ENCODE measurements at regions of chrX and their contacts with region 1.

Region 1: DNA sequence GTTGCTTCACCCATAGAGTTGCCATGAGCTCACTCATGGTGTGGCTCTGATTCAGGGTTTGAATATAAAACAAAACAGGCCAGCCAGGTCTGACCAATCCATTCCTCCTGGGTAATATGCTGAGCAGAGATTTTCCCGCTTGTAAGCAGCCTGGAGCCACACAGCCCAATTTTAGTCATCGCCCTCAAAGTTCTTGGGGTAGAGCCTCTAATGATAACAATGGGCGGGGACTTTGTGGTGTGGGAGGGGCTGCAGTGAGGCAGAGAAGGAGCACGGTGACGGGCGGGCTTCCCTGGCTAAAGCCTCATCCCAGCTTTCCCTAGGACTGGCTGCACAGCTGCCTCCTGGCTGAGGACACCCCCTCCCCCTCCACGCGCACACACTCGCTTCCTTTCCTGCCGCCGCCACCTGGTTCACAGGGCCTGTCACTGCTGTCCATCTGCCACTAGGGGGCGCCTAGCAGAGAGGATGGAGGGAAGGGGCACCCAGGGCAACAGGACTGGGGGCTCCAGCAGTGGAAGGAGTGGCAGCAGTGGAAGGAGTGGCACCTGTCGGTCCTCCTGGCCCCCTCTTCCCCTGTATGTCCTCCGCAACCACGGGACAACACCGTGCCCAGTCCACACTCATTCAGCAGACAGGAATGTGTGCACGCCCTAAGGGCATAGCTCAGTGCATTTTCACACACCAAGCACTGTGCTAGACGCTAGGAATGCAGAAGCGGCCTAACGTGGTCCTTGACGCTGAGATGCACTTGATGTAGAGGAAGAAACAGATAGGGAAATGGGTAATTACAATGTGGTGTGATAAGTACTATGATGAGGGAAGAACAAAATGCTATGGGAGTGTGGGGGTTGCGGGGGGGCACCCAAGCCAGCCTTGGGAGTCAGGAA is 26.8 kb downstream of the PRPS1 start:
- DNase-seq: peak; percentile 64
- ATAC-seq: peak; percentile 83

Region 2: GRCh38 chrX:107398115-107398514 is 257.0 kb before region 1 on chrX:
- intact Hi-C with region 1: no loop called
- DNase-seq: no peak
- ATAC-seq: no peak

Region 3: GRCh38 chrX:107448998-107449835 is 205.9 kb before region 1 on chrX and contains the start of gene FRMPD3:
- intact Hi-C with region 1: no loop called
- DNase-seq: peak; percentile 30
- ATAC-seq: no peak
- total RNA-seq, gene FRMPD3: not detected

Region 4: DNA sequence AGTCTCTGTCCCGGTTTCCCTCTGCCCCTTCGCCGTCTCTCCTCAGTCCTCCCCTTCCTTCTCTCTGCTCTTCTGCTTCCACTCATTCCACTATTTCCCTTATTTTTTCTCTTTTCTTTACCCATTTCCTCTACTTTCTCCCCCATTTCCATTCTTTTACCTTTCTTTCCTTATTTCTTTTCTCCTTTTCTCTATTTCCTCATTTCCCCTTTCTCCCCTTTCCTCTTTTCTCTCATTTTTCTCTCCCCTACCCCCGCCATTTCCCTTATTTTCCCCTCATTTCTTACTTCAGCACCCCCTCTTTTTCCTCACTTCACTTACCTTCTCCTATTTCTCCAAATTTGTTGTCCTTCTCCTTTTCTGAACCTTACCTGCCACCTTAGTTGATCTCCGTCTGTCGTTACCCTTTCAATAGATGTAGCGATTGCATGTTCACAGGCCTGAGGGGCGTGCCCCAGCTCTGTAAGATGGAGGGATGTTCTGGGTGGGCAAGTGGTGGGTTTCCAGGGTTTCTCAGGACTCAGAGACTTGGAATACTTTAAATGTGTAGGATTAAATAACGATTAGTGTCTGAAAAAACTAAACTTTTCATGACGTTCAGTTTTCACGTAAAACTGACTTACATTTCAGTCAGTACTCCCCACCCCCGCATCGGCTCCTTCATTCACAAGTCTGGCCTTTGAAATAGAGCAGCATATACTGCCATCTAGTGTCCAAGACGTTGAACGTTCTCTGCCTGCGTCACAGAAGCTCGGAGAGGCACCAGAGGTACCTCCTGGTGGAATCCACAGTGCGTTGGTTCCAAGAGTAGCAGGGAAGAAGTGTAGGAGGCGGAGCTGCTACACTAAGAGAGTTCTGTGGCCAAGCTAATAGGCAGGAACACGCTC is 121.8 kb after region 1 on chrX:
- intact Hi-C with region 1: loop called (anchors 5 kb)
- DNase-seq: peak; percentile 71
- ATAC-seq: peak; percentile 78

Region 5: DNA sequence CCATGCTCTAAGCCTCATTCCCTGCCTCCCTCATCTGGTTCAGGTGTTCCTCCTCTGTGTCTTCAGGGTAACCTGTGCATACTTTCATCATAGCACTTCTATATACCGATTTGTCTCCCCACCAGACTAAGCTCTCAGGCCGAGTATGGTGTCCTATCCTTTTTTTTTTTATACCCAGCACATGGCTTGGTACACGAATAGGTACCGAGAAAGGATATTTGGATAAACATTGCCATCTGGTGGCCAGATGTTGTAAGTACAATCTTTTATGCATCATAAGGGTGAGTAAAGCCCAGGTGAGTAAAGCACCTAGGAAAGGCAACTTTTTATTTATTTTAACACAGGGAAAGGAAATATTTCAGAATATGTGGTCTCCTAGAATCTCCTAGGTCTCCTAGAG is 238.9 kb after region 1 on chrX:
- intact Hi-C with region 1: loop called (anchors 5 kb)
- DNase-seq: no peak
- ATAC-seq: peak; percentile 56

Region 6: DNA sequence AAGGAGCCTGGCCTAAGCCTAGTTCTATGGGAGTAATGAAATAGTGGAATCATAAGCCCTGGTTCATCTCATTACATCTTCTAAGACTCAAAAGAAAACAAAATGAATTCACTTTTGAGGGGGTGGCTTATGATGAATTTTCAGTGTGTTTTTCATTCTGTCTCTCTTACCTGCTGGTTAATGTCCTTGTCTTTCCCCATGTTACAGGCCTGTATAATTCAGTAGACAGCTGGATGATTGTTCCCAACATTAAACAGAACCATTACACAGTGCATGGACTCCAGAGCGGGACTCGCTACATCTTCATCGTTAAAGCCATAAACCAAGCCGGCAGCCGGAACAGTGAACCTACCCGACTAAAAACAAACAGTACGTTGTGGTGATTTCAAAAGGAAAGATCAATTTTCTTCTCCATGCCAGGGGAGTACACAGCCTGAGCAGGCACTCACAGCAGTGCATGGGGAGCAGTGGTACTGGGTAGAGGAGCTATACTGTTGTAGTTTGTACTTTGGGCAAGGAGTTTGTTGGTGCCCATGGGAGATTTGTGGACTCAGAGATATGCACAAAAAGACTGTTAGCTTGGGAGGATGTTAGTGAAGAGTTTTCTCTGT is 269.1 kb after region 1 on chrX:
- intact Hi-C with region 1: no loop called
- DNase-seq: no peak
- ATAC-seq: no peak

Region 7: DNA sequence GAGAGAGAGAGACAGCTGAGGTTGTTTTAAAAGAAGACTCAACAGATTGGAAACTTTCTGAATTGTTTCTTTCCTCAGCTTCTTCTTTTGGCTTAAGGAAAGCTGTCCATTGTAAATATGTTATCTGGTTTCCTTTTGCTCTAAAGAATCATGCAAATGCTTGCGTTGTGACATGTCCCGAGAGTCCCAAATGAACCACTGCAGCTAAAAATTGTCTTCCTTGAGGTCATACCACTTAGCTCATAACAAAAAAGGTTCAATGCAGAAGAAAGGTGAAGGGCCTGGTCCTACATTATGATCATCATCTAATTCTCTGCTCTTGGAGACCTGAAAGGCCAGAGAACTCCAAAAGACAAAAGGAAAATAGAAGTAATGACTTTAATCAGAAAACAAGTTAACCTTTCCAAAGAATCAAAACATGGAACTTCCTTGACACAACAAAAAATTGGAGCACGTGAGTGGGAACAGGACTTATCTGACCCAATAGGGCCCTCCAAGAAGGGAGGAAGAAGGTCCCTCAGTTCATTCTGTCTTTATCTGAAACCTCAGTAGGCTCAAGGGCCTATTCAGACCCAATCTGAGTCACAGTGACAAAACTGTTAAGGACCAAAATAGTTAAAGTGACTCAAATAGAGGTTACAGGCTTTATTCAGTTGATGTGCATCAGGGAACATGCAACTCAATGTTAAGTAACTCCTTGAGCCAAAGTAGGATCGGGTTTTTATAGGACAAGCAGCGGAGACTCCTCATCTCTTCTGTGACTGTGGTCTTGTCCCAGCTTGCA is 375.0 kb after region 1 on chrX:
- intact Hi-C with region 1: no loop called
- DNase-seq: no peak
- ATAC-seq: no peak

Measured in left ventricle myocardium superior (tissue), 1 donor.